ENCODE measurements at regions of chr4 and their contacts with region 1.

Region 1: GRCh38 chr4:87489678-87490077 is 39.5 kb downstream of the SPARCL1 start:
- DNase-seq: no peak
- ATAC-seq: peak; percentile 31

Region 2: DNA sequence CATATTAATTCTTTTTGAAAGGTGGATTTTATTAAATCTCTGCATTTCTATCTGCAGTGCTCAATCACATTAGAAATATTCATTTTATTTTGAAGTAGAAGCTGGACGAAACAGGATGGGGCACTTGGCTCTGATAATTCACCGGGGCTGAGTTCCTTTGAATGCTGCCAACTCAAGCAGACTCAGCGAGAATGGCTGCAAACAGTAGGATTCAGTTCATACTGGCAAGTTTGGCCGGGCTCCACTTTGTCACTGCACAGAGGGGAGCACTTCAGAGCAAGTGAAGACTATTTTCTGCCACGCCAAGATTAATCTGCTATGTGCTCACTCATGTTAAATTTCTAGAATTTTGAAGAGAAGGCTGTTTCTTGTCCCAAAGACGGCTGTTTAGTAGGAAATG is 238.6 kb before region 1 on chr4:
- intact Hi-C with region 1: no loop called
- DNase-seq: no peak
- ATAC-seq: no peak

Region 3: DNA sequence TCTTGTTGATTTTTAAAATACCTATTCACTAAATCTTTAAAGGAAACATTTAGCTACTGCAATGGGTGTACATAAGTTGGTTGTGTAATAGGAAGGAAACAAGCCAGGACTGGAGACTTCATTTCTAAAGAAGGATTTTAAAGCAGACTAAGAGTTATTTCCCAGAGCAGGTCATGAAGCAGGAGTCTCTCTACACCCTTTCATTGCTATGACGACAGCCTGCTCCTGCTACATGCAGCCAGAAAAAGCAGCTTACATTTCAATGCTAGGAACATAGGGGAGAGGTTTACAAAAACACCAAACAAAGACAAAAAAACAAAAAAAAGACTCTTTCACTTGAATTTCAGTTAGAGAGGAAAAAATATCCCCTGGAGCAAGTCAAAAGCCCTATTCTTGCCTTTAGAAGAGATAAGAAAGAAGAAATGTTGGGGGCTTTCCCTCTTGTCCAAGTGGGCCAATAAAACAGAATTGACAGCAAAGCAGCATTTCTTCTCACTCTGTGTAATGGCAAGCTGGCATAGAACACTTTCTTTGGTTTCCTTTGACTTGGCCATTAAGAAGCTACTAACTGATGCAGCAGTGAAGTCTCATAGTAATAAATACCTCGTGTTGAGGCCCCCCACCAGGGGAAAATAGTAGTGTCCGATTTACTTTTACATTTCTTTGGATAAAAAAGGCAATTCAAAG is 36.1 kb after region 1 on chr4:
- intact Hi-C with region 1: loop called (anchors 5 kb)
- DNase-seq: no peak
- ATAC-seq: peak; percentile 55

Measured in Right ventricle myocardium inferior (tissue), 1 donor.